A549 (cell line): ENCODE measurements at regions of chr1 and their contacts with region 1.

Region 1: GRCh38 chr1:17680308-17680707 is 74.8 kb upstream of the ACTL8 start:
- DNase-seq: no peak
- ATAC-seq: no peak
- H3K4me3 ChIP-seq: no peak overlapping the region
- H3K27ac ChIP-seq: no peak overlapping the region
- H3K4me1 ChIP-seq: no peaks in the 10 kb centered on the region
- CTCF ChIP-seq: no peak
- EP300 ChIP-seq: no peak
- POLR2A ChIP-seq: no peak
- RAD21 ChIP-seq: no peak

Region 2: GRCh38 chr1:17669866-17670451 is 10.3 kb before region 1 on chr1:
- CTCF ChIA-PET with region 1: interaction called, 10 read pairs
- POLR2A ChIA-PET with region 1: no interaction called
- DNase-seq: no peak
- ATAC-seq: no peak
- H3K4me3 ChIP-seq: no peak overlapping the region
- H3K27ac ChIP-seq: no peak overlapping the region
- H3K4me1 ChIP-seq: no peaks in the 10 kb centered on the region
- CTCF ChIP-seq: no peak
- EP300 ChIP-seq: no peak
- POLR2A ChIP-seq: no peak
- RAD21 ChIP-seq: no peak

Region 3: DNA sequence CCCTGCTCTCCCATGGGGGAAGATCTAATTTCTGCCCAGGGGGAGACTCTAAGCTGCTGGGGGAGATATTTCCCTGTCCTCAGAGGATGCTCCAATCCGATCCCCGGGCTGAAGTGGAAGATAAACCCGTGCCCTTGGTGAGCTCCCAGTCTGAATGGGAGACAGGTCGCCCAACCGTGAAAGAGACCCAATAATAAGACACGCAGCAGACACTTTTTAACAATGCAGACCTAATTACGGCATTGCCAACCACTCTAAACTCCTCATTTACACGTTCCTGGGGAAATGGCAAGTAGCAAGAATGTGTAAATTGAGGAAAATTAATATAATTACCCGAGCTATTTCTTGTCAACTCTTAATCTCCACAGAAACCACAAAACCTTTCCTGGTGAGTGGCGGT is 26.1 kb after region 1 on chr1:
- CTCF ChIA-PET with region 1: no interaction called
- POLR2A ChIA-PET with region 1: no interaction called
- DNase-seq: no peak
- ATAC-seq: no peak
- H3K4me3 ChIP-seq: no peak overlapping the region
- H3K27ac ChIP-seq: no peak overlapping the region
- H3K4me1 ChIP-seq: no peaks in the 10 kb centered on the region
- CTCF ChIP-seq: no peak
- EP300 ChIP-seq: no peak
- POLR2A ChIP-seq: no peak
- RAD21 ChIP-seq: no peak